Body of pancreas (tissue), 4 donors: ENCODE measurements at regions of chr3 and their contacts with region 1.

Region 1: GRCh38 chr3:138705675-138706074 is 97.1 kb downstream of the FAIM start:
- DNase-seq: no peak
- ATAC-seq: no peak
- H3K4me3 ChIP-seq: no peak overlapping the region
- H3K27ac ChIP-seq: no peak overlapping the region
- H3K4me1 ChIP-seq: no peaks in the 10 kb centered on the region
- H3K27me3 ChIP-seq: no peaks in the 10 kb centered on the region
- CTCF ChIP-seq: no peak
- POLR2A ChIP-seq: no peak

Region 2: GRCh38 chr3:138608322-138609135 is 97.1 kb before region 1 on chr3 and contains the start of gene FAIM:
- intact Hi-C with region 1: no loop called
- DNase-seq: peak; percentile 78 to 82 (median 80)
- ATAC-seq: peak; percentile 77
- H3K4me3 ChIP-seq: peak within 1 kb of the TSS; percentile 55 to 70
- H3K27ac ChIP-seq: peak within 1 kb of the TSS; percentile 96 to 99 (median 97)
- H3K4me1 ChIP-seq: peaks cover 39% of the 10 kb centered on the region
- H3K27me3 ChIP-seq: no peaks in the 10 kb centered on the region
- CTCF ChIP-seq: no peak
- POLR2A ChIP-seq: peak; percentile 69 to 84 (median 80)
- total RNA-seq, gene FAIM: 29.3 to 34.0 TPM

Region 3: GRCh38 chr3:138915503-138916498 is 210.1 kb after region 1 on chr3:
- intact Hi-C with region 1: loop called (anchors 10 kb)
- DNase-seq: peak; percentile 94 to 96 (median 94)
- ATAC-seq: peak; percentile 91
- H3K4me3 ChIP-seq: peak overlapping the region; percentile 44 to 71
- H3K27ac ChIP-seq: peak overlapping the region; percentile 94 to 98 (median 97)
- H3K4me1 ChIP-seq: peaks cover 19% of the 10 kb centered on the region
- H3K27me3 ChIP-seq: no peaks in the 10 kb centered on the region
- CTCF ChIP-seq: peak; percentile 80 to 98 (median 96)
- POLR2A ChIP-seq: peak; percentile 52 to 84 (median 80)